ENCODE measurements at regions of chr11 and their contacts with region 1.

Region 1: DNA sequence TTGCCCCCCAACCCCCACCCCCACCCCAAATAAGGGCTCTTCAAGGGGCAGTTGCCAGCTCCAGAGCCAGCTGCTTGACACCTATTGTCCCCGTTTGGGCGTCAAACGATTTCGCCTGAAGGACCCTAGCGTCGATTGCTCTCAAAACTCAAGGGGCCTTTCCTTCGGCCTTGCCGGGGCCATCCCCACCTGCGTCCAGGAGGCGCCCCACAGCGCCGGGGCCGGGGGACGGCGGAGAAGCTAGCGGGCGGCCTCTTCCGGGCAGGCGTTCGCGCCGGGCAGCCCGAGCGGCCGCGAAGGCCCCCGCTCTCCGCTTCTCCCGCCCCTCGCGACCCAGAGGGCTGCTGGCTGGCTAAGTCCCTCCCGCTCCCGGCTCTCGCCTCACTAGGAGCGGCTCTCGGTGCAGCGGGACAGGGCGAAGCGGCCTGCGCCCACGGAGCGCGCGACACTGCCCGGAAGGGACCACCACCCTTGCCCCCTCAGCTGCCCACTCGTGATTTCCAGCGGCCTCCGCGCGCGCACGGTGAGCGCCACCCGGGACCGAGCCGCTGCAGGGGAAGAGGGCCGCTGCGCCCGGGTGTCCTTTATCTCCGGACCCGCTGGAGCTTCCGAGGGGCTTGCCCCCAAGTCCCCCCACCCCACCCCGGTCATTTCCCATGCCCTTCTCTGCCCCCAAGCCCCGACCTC is at the start of gene CAPRIN1:
- DNase-seq: peak; percentile 94
- ATAC-seq: peak; percentile 94
- total RNA-seq, gene CAPRIN1: 120 TPM

Region 2: GRCh38 chr11:33869481-33870422 is 181.7 kb before region 1 on chr11:
- intact Hi-C with region 1: loop called (anchors 5 kb)
- DNase-seq: peak; percentile 81
- ATAC-seq: peak; percentile 74

Region 3: DNA sequence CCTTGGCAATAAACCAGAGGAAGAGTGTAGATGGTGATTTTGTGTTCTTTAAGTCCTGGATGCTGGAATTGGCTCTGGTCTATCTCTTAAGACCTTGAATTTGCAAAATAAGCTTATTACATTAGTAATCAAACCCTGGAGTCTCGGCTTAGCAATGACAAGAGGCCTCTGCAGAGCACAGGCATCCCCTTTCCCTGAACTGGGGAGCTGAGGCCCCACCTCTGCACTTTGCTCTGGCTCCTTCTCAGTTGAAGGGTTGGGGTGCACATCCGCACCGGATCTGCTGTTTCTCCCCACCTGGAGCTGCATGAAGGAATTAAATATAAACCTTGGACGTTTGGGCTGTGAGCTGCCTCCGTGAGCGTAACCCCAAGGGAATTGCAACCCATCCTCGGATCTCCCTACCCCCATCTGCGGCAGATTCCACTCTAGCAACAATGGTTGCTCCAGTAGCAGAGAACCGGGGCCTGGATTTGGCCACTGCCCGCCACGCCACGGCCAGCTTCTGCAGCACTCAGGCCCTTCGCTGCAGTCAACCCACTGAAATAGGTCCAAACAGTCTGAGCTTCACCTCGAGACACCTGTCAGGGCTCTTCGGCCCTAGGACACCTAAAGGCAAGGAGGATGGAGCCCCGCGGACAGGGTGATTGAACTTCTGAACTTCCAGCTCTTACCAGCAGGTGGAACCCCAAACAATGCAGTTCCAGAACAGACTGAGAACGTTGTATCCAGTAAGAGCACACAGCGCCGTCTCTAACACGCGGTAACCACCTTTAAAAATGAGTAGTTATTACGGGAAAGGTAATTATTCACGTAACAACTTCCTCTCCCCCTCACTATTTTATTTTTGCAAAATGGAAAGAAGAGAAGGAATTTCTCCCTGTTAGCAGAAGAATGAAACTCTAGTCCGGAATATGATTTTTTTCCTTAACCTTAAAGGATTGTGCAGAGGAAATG is 54.7 kb before region 1 on chr11:
- intact Hi-C with region 1: loop called (anchors 5 kb)
- DNase-seq: no peak
- ATAC-seq: peak; percentile 94

Region 4: GRCh38 chr11:34105079-34105956 is 53.8 kb after region 1 on chr11 and contains the start of gene NAT10:
- intact Hi-C with region 1: loop called (anchors 1 kb)
- DNase-seq: peak; percentile 98
- ATAC-seq: peak; percentile 98
- total RNA-seq, gene NAT10: 22.8 TPM

Region 5: DNA sequence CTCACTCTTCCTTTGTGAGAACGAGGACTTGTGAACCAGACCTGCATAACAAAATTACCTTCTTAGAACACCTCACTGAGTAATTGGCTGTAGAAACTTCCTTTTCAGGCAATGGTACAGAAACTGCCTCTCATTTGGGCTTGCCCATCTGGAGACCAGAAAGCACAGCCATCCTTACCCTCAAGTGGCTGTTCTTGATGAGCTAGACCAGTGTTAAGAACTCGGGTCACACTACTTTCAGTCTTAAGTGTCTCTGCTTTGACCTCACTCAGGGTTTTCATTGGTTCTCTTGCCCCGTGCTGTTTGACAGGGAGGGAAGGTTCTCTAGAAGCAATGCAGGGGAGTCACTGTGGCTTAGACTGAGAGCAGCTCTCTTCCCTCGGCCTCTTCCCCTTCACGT is 83.3 kb after region 1 on chr11:
- intact Hi-C with region 1: no loop called
- DNase-seq: no peak
- ATAC-seq: no peak

Region 6: GRCh38 chr11:34174412-34175041 is 123.0 kb after region 1 on chr11:
- intact Hi-C with region 1: no loop called
- DNase-seq: peak; percentile 93
- ATAC-seq: peak; percentile 99